ENCODE measurements at regions of chr16 and their contacts with region 1.

Region 1: DNA sequence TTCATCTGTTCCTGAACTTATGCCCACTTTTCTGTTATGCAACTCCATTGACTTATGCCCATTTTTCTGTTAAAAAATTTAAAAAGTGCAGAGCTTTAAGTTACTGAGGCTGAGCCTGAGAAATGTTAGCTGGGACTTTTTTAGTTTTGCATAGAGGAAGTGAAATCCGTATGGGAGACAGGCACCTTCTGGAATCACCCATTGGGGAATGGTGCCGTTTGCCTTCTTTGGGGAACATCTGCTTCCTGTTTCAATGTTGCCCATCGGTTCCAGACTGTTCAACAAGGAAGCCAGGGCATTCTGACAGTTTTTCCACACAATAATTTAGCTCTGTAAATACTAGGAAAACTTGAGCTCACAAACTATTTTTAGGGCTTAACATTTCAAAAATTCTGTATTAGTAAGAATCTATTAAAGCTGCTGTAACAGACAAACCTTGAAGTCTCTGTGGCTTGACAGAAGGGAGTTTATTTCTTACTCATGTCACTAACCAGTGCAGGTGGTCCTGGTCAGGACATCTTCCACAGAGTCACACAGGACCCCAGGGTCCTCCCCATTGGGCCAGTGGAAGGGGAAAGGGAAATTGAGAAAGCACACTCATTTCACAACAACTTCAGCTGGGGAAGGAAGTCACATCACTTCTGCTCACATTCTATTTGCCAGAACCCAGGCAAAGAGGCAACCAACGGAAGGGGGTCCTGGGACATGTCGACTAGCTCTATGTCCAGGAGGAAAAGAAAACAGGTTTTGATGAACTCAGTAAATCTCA is 17.2 kb downstream of the PRKCB start:
- DNase-seq: no peak
- H3K4me3 Mint-ChIP-seq: no peak overlapping the region
- H3K27ac Mint-ChIP-seq: no peak overlapping the region
- H3K4me1 Mint-ChIP-seq: peaks cover 87% of the 10 kb centered on the region
- H3K27me3 Mint-ChIP-seq: no peaks in the 10 kb centered on the region

Region 2: DNA sequence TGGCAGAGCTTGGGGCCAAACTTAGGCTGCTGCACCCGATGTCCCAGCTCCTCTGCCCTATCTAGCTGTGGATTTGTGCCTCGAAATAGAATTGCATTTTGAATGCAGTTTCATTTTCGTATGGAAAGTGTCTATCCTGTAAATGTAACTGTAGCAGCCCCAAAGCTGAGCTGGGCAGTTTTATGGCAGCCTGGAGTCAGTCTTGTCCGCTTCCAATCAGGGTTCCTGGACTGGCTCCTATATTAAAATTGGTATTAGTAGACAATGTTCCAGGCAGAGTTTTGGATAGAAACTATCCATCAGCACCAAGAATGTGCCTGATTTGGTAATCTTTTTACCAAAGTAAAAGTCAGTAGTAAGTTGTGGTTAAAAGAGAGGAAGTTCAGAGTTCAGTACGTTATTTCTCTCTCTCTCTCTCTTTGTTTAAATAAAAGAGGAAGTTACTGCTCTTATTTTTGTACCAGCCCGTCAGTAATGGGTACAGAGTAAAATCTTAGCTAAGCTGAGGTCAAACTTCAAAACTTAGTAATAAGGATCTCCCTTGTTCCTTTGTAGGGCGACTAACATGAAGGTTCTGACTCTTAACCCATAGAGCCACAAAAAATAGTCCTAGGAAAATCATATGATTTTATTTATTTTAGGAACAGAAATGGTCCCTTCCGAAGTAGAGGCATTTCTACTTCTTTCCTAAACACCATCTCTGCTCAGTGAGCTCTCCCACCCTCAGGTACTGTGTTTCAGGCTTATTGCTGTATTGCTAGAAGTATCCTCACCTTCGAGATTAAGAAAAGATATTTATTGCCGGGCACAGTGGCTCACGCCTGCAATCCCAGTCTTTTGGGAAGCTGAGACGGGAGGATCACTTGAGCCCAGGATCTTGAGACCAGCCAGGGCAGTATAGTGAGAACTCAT is 10.8 kb after region 1 on chr16:
- CTCF ChIA-PET with region 1: no interaction called
- POLR2A ChIA-PET with region 1: interaction called, 3 read pairs
- intact Hi-C with region 1: loop called (anchors 1 kb)
- DNase-seq: peak; percentile 44
- H3K4me3 Mint-ChIP-seq: peak overlapping the region; percentile 72
- H3K27ac Mint-ChIP-seq: peak overlapping the region; percentile 80
- H3K4me1 Mint-ChIP-seq: peaks cover 69% of the 10 kb centered on the region
- H3K27me3 Mint-ChIP-seq: no peaks in the 10 kb centered on the region

Region 3: DNA sequence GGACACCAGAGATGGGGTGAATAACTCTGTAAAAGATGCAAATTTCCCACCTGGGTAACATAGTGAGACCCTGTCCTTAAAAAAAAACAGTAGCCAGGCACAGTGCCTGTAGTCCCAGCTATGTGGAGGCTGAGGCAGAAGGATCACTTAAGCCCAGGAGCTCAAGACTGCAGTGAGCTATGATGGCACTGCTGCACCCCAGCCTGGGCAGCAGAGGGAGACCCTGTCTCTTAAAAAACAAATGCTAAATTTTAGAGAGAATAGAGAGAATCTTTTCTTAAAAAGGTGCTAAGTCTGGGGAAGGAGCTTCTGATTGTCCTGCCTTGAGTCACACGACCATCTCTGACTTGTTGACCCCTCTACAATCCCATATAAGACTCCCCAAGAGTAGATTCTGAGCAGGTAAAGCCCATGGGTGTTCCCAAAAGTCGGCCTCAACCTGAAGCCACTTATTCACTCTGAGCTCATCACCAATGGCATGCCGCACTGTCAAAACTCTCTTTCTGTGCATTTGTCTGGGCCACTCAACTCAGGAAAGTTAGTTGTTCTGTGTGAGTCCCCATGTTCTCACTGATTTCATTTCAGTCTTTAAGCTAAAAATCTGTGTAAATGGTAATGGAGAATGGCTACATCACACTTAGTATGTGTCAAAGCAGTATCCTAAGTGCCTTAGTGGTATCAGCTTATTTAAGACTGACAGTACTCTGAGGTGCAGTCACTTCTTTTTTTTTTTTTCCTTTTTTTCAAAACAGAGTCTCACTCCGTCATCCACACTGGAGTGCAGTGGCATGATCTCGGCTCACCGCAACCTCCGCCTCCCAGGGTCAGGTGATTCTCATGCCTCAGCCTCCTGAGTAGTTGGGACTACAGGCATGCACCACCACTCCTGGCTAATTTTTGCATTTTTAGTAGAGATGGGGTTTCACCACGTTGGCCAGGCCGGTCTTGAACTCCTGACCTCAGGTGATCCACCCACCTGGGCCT is 24.4 kb after region 1 on chr16:
- CTCF ChIA-PET with region 1: no interaction called
- POLR2A ChIA-PET with region 1: no interaction called
- intact Hi-C with region 1: no loop called
- DNase-seq: peak; percentile 65
- H3K4me3 Mint-ChIP-seq: no peak overlapping the region
- H3K27ac Mint-ChIP-seq: peak overlapping the region; percentile 49
- H3K4me1 Mint-ChIP-seq: peaks cover 73% of the 10 kb centered on the region
- H3K27me3 Mint-ChIP-seq: no peaks in the 10 kb centered on the region

Region 4: DNA sequence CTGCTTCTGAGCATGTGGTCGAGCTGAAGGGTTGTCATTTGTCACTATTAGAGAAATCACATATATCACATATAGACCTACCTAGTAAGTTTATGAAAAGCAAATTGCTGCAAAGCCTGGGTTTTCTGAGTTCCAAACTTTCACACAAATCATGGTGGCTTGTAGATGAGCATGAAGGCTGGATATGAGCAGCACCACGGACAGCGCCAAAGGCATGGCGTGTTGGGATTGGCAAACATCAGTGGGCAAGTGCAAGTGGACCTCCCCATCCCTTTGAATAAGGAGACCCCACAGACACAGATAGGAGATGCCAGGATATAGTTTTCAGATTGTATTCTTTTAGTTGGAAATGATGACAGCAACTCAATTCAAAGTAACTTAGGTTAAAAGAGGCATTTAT is 325.5 kb after region 1 on chr16:
- CTCF ChIA-PET with region 1: no interaction called
- POLR2A ChIA-PET with region 1: no interaction called
- intact Hi-C with region 1: no loop called
- DNase-seq: peak; percentile 23
- H3K4me3 Mint-ChIP-seq: no peak overlapping the region
- H3K27ac Mint-ChIP-seq: no peak overlapping the region
- H3K4me1 Mint-ChIP-seq: no peaks in the 10 kb centered on the region
- H3K27me3 Mint-ChIP-seq: no peaks in the 10 kb centered on the region

Region 5: GRCh38 chr16:24452724-24453123 is 599.7 kb after region 1 on chr16:
- CTCF ChIA-PET with region 1: no interaction called
- POLR2A ChIA-PET with region 1: no interaction called
- intact Hi-C with region 1: no loop called
- DNase-seq: no peak
- H3K4me3 Mint-ChIP-seq: no peak overlapping the region
- H3K27ac Mint-ChIP-seq: no peak overlapping the region
- H3K4me1 Mint-ChIP-seq: no peaks in the 10 kb centered on the region
- H3K27me3 Mint-ChIP-seq: peaks cover 18% of the 10 kb centered on the region

Measured in activated CD4-positive, alpha-beta memory T cell treated with anti-CD3 and anti-CD28 coated beads for 36 hours (primary cell).